ENCODE measurements at regions of chr19 and their contacts with region 1.

Region 1: DNA sequence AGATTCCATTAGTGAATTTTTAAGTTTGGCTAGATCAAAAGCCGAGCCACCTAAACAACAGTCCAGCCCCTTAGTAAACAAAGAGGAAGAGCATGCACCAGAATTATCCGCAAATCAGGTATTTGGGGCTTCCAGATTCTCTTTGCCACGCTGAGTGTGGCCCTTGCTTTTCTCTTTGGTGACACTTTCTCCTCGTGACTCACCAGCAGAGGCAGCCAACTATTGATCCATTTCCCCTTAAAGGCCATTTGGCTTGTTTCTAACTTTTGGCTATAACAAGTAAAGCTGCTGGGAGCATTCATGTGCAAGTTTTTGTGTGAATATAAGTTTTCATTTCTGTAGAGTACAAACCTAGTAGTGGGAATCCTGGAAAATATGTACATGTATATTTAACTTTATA is 17.6 kb upstream of the WDR88 start:
- DNase-seq: no peak
- H3K4me3 ChIP-seq: no peak overlapping the region
- H3K27ac ChIP-seq: no peak overlapping the region
- H3K4me1 ChIP-seq: no peaks in the 10 kb centered on the region
- H3K27me3 ChIP-seq: no peaks in the 10 kb centered on the region
- CTCF ChIP-seq: no peak
- EP300 ChIP-seq: no peak
- POLR2A ChIP-seq: no peak
- RAD21 ChIP-seq: no peak

Region 2: DNA sequence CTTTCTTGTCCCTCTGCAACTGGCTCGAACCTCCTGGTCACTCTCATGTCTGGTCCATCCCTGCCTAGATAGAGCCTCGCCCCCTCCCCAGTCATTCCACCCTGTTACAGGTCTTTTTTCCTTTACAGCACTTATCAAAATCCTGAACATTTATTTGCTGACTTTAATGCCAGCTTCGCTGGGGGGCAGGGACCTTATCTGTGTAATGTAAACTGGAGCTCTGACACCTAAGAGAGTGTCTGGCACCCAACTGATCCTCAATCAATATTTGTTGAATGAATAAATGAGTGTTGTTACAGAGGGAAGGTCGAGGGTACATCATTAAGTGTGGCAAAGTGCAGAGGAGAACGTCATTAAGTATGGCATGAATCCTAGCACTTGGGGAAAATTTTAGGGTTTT is 125.6 kb before region 1 on chr19:
- CTCF ChIA-PET with region 1: interaction called, 16 read pairs
- POLR2A ChIA-PET with region 1: no interaction called
- DNase-seq: no peak
- H3K4me3 ChIP-seq: no peak overlapping the region
- H3K27ac ChIP-seq: no peak overlapping the region
- H3K4me1 ChIP-seq: no peaks in the 10 kb centered on the region
- H3K27me3 ChIP-seq: no peaks in the 10 kb centered on the region
- CTCF ChIP-seq: no peak
- EP300 ChIP-seq: no peak
- POLR2A ChIP-seq: no peak
- RAD21 ChIP-seq: no peak

Measured in H1 (cell line).